IMR-90 (cell line): ENCODE measurements at regions of chr6 and their contacts with region 1.

Region 1: GRCh38 chr6:130020907-130021629 is 2.7 kb downstream of the L3MBTL3 start:
- DNase-seq: peak; percentile 95
- ATAC-seq: peak; percentile 62
- H3K4me3 ChIP-seq: peak overlapping the region; percentile 86
- H3K27ac ChIP-seq: peak overlapping the region; percentile 81
- H3K4me1 ChIP-seq: no peaks in the 10 kb centered on the region
- H3K27me3 ChIP-seq: no peaks in the 10 kb centered on the region
- CTCF ChIP-seq: peak; percentile 95
- POLR2A ChIP-seq: peak; percentile 46
- RAD21 ChIP-seq: peak; percentile 91

Region 2: DNA sequence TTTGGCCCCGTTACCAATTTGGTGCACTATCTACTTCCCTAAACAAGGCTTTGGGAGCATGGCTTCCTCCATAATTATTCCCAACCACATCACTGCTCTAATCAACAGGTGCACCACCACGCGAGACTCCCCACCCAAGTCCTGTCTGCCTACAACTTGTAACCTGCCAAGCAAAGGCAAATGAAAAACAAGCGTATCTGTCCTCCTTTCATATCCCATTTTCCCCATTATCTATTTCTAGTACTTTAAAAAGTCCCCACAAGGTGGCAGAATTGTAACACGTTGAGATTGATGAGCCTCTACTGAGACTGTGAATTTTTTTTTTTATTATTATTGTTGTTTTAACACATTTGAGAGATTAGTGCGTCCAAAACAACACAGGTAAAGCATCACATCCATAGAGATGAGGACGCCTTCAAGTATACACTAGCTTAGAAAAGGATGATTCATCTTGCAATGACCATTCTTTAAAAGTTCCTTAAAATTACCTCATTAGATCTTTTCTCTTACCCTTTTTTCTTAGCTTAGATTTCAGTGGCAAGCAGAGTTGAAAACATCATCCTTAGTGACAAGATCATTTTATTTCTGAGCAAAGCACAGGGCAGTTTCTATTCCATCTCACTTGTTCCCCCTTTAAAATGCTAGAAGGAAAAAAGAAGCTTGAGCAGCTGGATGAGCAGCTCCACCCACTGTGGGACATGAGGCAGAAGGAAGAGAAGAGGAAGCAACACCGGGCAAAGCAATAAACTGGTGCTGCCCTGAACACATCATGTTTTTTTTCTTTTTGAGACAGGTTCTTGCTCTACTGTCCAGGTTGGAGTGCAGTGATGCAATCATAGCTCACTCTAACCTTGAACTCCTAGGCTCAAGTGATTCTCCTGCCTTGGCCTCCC is 521.9 kb before region 1 on chr6:
- CTCF ChIA-PET with region 1: no interaction called
- POLR2A ChIA-PET with region 1: no interaction called
- dilution Hi-C with region 1: no loop called
- in situ Hi-C with region 1: loop called (anchors 10 kb)
- intact Hi-C with region 1: loop called (anchors 1 kb)
- DNase-seq: peak; percentile 61
- ATAC-seq: peak; percentile 46
- H3K4me3 ChIP-seq: no peak overlapping the region
- H3K27ac ChIP-seq: peak overlapping the region; percentile 7; the same call in 1 of the 2 replicates
- H3K4me1 ChIP-seq: peaks cover 13% of the 10 kb centered on the region
- H3K27me3 ChIP-seq: no peaks in the 10 kb centered on the region
- CTCF ChIP-seq: peak; percentile 66
- POLR2A ChIP-seq: no peak
- RAD21 ChIP-seq: peak; percentile 71

Region 3: DNA sequence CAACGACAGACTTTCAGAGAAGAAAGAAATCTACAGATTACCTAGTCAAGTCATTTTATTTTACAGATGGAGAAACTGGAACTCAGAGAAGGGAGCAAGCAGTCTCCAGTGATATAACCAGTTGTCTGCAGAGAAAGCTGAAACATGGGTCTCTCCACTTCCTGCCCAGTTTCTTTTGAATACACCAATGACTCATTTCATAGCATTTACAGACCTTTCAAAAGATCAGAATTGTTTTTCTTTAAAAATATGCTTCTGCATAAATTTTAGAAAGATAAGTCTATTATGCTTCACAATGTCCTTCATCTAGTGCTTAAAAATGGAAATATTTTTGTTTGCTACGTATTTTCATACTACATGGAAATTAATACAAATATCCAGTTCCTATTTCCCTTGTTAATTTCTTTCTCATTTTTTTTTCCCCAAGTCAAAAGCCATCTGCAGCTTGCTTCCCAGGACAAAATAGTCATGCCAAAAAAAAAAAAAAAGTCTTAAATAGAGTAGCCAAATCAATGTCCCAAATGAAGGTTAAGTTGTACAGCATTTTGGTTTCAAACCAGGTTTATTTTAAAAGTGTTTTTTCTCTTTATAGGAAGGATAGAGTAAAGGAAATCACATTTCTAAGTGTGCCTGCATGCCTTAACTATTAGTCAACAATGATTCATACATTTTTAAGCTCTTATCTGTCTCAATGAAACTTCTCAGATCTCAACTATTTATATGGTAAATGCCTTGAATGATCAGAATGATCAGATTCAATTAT is 348.0 kb before region 1 on chr6:
- CTCF ChIA-PET with region 1: no interaction called
- POLR2A ChIA-PET with region 1: no interaction called
- dilution Hi-C with region 1: no loop called
- in situ Hi-C with region 1: loop called (anchors 10 kb)
- intact Hi-C with region 1: loop called (anchors 5 kb)
- DNase-seq: peak; percentile 87
- ATAC-seq: peak; percentile 80
- H3K4me3 ChIP-seq: no peak overlapping the region
- H3K27ac ChIP-seq: peak overlapping the region; percentile 95
- H3K4me1 ChIP-seq: peaks cover 14% of the 10 kb centered on the region
- H3K27me3 ChIP-seq: no peaks in the 10 kb centered on the region
- CTCF ChIP-seq: no peak
- POLR2A ChIP-seq: no peak
- RAD21 ChIP-seq: no peak

Region 4: DNA sequence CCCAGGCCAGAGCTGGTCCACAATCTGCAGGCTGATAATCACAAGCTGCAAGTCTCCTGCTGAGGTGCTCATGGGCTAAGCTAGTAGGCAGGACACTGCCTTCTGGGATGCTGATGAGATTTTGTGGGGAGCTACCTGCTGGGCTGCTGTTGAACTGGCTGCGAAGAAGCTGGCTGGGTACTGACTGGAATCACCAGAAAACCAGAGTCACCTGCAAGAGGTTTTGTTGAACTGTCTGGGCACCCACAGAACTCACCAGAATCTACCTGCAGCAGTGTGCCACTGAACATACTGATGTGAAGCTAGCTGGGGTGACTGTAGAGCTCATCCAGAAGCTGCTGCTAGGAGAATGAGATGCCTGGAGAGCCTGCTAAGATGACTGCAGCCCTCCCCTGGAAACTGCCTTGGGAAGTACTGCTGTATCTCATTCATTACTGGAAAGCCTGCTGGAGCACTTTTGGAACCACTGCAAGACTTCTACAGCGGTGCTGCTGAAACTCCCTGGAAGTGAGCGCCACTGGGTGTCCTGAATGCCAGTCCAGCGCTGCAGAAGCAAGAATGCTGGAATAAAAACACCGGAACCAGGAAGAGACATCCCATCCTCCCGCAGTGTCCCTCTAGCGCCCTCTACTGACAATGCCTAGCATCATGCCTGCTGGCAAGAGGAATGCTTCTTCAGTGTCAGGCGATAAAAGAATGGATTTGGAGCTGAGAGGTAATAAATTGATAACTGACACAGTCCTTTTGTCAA is 246.2 kb before region 1 on chr6:
- CTCF ChIA-PET with region 1: no interaction called
- POLR2A ChIA-PET with region 1: no interaction called
- dilution Hi-C with region 1: no loop called
- in situ Hi-C with region 1: no loop called
- intact Hi-C with region 1: loop called (anchors 1 kb)
- DNase-seq: peak; percentile 82
- ATAC-seq: peak; percentile 97
- H3K4me3 ChIP-seq: peak overlapping the region; percentile 10; the same call in 1 of the 2 replicates
- H3K27ac ChIP-seq: no peak overlapping the region
- H3K4me1 ChIP-seq: no peaks in the 10 kb centered on the region
- H3K27me3 ChIP-seq: no peaks in the 10 kb centered on the region
- CTCF ChIP-seq: peak; percentile 92
- POLR2A ChIP-seq: no peak
- RAD21 ChIP-seq: peak; percentile 83

Region 5: DNA sequence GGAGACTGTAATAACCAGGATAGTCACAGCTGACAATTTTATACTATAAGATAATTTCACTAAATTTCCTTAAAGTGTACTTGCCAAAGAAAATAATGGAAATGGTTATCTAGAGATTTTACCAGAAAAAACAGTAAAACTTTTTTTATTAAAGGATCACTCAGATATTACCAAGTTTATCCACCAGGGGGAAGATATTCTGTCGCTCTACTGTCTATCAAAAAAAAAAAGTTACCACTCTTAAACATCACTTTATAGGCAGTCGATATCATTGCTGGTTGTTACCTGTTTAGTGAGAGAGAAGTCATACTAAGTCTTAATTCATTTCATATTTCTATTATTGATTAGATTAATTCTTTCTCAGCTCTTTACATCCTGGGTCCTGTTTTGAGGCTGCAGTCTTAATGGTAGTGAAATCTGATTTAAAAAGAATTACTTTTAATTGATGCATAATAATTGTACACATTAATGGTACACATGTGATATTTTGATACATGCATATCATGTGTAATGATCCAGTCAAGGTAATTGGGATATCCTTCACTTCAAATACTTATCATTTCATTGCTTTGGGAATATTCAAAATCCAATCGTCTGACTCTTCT is 16.2 kb after region 1 on chr6:
- CTCF ChIA-PET with region 1: interaction called, 10 read pairs
- POLR2A ChIA-PET with region 1: no interaction called
- dilution Hi-C with region 1: no loop called
- in situ Hi-C with region 1: no loop called
- intact Hi-C with region 1: no loop called
- DNase-seq: no peak
- ATAC-seq: no peak
- H3K4me3 ChIP-seq: no peak overlapping the region
- H3K27ac ChIP-seq: no peak overlapping the region
- H3K4me1 ChIP-seq: peaks cover 18% of the 10 kb centered on the region
- H3K27me3 ChIP-seq: no peaks in the 10 kb centered on the region
- CTCF ChIP-seq: peak; percentile 47
- POLR2A ChIP-seq: no peak
- RAD21 ChIP-seq: peak; percentile 24

Region 6: DNA sequence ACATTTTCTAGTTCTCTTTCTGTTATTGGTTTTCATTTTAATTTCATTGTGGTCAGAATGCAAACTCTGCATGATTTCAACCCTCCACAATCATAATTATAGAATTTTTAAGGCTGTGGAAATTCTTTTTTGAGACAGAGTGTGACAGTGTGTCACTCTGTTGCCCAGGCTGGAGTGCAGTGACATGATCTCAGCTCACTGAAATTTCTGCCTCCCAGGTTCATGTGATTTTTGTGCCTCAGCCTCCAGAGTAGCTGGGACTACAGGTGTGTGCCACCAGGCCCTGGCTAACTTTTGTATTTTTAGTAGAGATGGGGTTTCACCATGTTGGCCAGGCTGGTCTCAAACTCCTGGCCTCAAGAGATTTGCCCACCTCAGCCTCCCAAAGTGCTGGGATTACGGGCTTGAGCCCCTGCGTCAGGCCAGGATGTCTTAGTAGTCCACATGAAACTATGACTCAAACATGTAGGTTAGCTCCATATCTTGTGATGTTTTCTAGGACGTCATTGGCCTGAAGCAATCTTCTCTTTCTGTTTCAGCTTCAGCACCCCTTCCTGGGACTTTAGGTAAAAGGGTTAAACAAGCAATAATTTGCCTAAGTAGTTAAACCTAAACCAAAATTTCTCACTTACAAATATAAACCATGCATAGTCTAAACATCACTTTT is 249.0 kb after region 1 on chr6:
- CTCF ChIA-PET with region 1: no interaction called
- POLR2A ChIA-PET with region 1: no interaction called
- dilution Hi-C with region 1: no loop called
- in situ Hi-C with region 1: no loop called
- intact Hi-C with region 1: no loop called
- DNase-seq: no peak
- ATAC-seq: no peak
- H3K4me3 ChIP-seq: no peak overlapping the region
- H3K27ac ChIP-seq: no peak overlapping the region
- H3K4me1 ChIP-seq: no peaks in the 10 kb centered on the region
- H3K27me3 ChIP-seq: no peaks in the 10 kb centered on the region
- CTCF ChIP-seq: no peak
- POLR2A ChIP-seq: no peak
- RAD21 ChIP-seq: no peak

Region 7: GRCh38 chr6:130288065-130288464 is 267.0 kb after region 1 on chr6:
- CTCF ChIA-PET with region 1: no interaction called
- POLR2A ChIA-PET with region 1: no interaction called
- dilution Hi-C with region 1: no loop called
- in situ Hi-C with region 1: no loop called
- intact Hi-C with region 1: no loop called
- DNase-seq: peak; percentile 2
- ATAC-seq: no peak
- H3K4me3 ChIP-seq: no peak overlapping the region
- H3K27ac ChIP-seq: no peak overlapping the region
- H3K4me1 ChIP-seq: no peaks in the 10 kb centered on the region
- H3K27me3 ChIP-seq: peaks cover 2% of the 10 kb centered on the region; the same call in 1 of the 2 replicates
- CTCF ChIP-seq: no peak
- POLR2A ChIP-seq: no peak
- RAD21 ChIP-seq: no peak